Transverse colon (tissue), 4 donors: ENCODE measurements at regions of chr12 and their contacts with region 1.

Region 1: GRCh38 chr12:124754949-124755800 is 108.5 kb downstream of the SCARB1 start:
- DNase-seq: peak; percentile 73
- H3K4me3 ChIP-seq: no peak overlapping the region
- H3K27ac ChIP-seq: peak overlapping the region; percentile 77 to 90 (median 85)
- H3K4me1 ChIP-seq: peaks cover 8 to 30% (median 18%) of the 10 kb centered on the region in 4 donors
- H3K27me3 ChIP-seq: no peaks in the 10 kb centered on the region
- CTCF ChIP-seq: no peak
- EP300 ChIP-seq: peak; percentile 80
- POLR2A ChIP-seq: no peak

Region 2: DNA sequence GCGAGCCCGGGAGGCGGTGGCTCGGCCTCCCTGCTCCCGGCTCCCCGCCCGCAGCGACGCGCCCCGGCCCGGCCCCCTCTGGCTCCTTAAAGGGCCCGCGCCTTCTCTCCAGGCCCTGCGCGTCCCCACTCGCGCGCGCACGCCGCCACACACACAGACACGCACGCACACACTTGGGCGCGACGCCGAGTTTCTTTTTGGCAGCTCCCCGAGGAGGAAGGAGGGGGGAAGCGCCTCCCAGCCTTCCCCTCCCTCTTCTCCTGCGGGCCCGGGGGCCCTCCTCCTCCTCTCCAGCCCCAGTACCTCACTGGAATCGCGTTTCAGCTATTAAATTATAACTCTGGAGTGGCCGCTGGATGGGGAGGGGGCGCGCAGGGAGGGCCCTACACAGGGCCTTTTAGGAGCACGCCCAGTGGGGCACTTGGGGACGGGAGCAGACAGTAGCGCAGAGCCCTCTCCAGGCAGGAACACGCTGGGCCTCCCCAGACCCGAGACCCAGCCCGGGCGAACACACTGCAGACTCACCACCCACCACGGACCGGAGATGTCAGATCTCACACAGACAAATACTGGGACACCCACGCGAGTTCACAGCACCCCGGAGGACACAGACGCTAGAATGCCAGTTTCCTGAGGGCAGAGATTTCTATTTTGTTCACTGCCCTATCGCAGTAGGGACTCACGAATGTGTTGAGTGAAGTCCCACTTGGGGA is 187.4 kb before region 1 on chr12:
- in situ Hi-C with region 1: loop called in 3 of 4 experiments (anchors 10 kb)
- intact Hi-C with region 1: loop called (anchors 5 kb)
- DNase-seq: peak; percentile 92
- H3K4me3 ChIP-seq: peak overlapping the region; percentile 8 to 57 (median 38)
- H3K27ac ChIP-seq: peak overlapping the region; percentile 82 to 100 (median 88)
- H3K4me1 ChIP-seq: peaks cover 23 to 47% (median 41%) of the 10 kb centered on the region in 4 donors
- H3K27me3 ChIP-seq: no peaks in the 10 kb centered on the region
- CTCF ChIP-seq: no peak
- EP300 ChIP-seq: no peak
- POLR2A ChIP-seq: no peak

Region 3: DNA sequence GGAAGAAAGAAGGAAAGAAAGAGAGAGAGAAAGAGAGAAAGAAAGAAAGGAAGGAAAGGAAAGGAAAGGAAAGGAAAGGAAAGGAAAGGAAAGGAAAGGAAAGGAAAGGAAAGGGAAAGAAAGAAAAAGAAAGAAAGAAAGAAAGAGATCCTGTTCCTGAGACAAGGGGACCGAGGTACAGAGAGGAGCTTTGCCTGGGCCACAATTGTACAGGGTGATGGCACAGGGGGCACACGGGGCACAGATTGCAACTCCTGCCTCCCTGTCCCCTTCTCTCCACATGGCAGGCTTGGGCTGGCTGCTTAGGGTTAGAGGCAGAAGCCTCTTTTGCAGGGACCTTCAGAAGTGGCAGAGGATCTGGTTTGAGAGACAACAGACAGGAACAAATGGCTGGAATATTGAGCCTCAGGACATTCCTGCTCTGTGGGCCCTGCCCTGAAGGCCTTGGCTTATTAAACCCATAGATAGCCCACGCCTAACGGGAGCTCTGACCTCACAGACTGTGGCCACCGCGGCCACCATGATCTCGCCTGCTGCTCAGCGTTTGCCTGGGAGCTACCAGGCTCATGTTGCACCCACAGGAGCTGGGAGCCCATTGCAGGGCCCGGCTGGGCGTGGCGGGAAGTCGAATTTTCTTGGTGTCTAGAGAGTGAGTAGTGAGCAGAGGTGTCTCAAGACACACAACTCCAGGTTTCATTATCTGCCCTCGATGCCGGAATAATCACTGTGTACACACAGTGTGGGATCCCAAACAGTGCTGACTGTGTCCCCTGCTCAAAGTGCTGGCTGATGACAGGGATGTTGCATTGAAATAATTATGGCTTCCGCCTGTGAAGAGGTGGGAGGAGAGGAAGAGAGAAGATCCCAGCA is 39.8 kb before region 1 on chr12:
- in situ Hi-C with region 1: no loop called
- intact Hi-C with region 1: loop called (anchors 5 kb)
- DNase-seq: peak; percentile 37
- H3K4me3 ChIP-seq: no peak overlapping the region
- H3K27ac ChIP-seq: no peak overlapping the region
- H3K4me1 ChIP-seq: peaks cover 3 to 23% (median 12%) of the 10 kb centered on the region in 4 donors
- H3K27me3 ChIP-seq: no peaks in the 10 kb centered on the region
- CTCF ChIP-seq: no peak
- EP300 ChIP-seq: no peak
- POLR2A ChIP-seq: no peak

Region 4: DNA sequence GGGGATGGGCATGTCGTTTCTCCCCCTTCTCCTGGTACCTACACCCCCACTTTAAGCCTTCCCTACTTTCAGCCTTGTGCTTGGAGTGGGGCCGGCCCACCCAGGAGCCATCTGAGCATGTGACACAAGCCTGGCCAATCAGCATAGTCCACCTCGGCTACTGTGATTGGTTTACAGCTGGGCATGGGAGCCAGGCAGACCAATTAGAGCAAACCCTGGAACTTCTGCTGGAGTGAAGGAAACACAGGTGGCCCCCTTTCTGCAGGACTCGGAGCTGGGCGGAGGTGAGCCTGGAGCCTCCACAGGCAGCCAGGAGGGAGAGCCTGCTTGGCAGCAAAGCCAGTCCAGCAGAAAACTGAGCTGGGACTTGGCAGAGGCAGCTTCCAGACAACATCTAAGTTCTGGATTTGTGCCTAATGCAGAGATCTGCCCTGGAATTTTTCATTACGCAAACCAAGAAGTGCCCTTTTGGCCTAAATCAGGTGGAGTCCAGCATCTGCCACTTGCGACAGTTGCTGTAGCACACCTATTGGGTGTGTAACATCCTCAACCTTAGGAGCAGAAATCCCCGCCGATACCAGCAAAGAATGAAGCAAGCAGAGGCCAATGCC is 48.9 kb after region 1 on chr12:
- in situ Hi-C with region 1: no loop called
- intact Hi-C with region 1: no loop called
- DNase-seq: no peak
- H3K4me3 ChIP-seq: no peak overlapping the region
- H3K27ac ChIP-seq: peak overlapping the region in 1 of 4 donors; percentile 0
- H3K4me1 ChIP-seq: no peaks in the 10 kb centered on the region
- H3K27me3 ChIP-seq: no peaks in the 10 kb centered on the region
- CTCF ChIP-seq: no peak
- EP300 ChIP-seq: no peak
- POLR2A ChIP-seq: no peak

Region 5: DNA sequence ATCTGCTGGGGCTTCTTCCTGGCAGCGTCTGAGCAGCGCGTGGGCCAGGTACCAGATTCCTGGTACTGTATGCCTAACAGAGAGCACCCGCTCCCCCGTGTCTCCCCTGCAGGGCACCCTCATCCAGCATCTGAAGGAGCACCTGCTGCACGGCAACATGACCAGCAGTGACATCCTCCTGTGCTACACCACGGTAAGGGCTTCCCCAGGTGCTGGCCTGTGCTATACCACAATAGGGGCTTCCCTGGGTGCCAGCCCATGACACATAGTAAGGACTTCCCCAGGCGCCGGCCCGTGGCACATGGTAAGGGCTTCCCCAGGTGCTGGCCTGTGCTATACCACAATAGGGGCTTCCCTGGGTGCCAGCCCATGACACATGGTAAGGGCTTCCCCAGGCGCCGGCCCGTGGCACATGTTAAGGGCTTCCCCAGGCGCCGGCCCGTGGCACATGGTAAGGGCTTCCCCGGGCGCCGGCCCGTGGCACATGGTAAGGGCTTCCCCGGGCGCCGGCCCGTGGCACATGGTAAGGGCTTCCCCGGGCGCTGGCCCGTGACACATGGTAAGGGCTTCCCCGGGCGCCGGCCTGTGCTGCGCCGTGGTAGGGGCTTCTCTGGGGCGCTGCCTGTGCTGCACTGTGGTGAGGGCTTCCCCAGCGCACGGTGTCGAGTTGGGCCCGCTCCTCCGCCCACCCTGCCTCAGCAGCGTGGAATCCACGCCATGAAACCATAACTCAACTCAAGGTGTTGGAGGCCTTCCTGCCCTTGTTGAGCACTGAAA is 359.4 kb after region 1 on chr12:
- in situ Hi-C with region 1: no loop called
- intact Hi-C with region 1: no loop called
- DNase-seq: no peak
- H3K4me3 ChIP-seq: no peak overlapping the region
- H3K27ac ChIP-seq: no peak overlapping the region
- H3K4me1 ChIP-seq: peaks cover 0 to 21% (median 10%) of the 10 kb centered on the region in 4 donors
- H3K27me3 ChIP-seq: no peaks in the 10 kb centered on the region
- CTCF ChIP-seq: no peak
- EP300 ChIP-seq: no peak
- POLR2A ChIP-seq: no peak